ENCODE measurements at regions of chr2 and their contacts with region 1.

Region 1: GRCh38 chr2:207133820-207134519 is 31.8 kb downstream of the KLF7 start:
- DNase-seq: peak; percentile 90
- H3K4me3 ChIP-seq: peak overlapping the region; percentile 10 to 18
- H3K27ac ChIP-seq: peak overlapping the region; percentile 84 to 100
- H3K4me1 ChIP-seq: peaks cover 0 to 93% (median 68%) of the 10 kb centered on the region in 4 donors
- H3K27me3 ChIP-seq: no peaks in the 10 kb centered on the region
- CTCF ChIP-seq: no peak

Region 2: DNA sequence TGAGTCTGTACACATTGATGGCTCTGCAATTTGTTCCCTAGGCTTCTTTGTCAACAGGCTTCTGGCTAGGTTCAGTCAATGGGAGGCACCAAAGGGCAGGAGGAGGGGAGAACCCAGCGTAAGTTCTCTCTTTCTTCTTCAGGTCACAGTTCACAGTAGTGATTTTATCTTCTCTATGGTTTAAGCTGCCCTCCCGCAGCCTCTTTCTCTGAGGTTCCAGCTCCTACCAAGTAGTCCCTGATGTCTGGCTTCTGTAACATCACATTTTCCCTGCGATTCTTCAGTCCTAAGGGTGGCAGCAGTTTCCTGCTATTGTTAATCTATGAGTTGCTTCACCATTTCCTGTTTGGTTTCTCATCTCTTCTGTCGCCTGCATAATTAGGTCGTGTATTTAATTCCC is 87.2 kb before region 1 on chr2:
- intact Hi-C with region 1: loop called (anchors 10 kb)
- DNase-seq: no peak
- H3K4me3 ChIP-seq: no peak overlapping the region
- H3K27ac ChIP-seq: no peak overlapping the region
- H3K4me1 ChIP-seq: peaks cover 0 to 44% (median 26%) of the 10 kb centered on the region in 4 donors
- H3K27me3 ChIP-seq: no peaks in the 10 kb centered on the region
- CTCF ChIP-seq: no peak

Region 3: DNA sequence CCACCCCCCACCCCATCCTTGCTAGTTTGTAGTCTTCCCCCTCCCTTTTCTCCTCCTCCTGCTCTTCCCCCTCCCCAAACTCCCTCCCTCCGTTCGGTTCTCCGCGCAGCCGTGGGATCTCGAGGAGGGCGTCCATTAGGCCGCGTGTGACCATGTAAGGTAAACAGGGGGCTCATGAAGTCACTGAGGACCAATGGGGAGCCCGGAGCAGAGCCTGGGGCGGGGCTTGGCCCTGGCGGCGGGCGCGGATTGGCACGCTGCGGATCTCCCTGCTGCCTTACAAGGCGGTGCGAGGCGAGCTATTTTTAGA is 32.0 kb after region 1 on chr2:
- intact Hi-C with region 1: loop called (anchors 5 kb)
- DNase-seq: peak; percentile 99 to 100
- H3K4me3 ChIP-seq: peak overlapping the region; percentile 90 to 98
- H3K27ac ChIP-seq: peak overlapping the region; percentile 100
- H3K4me1 ChIP-seq: peaks cover 0 to 33% (median 17%) of the 10 kb centered on the region in 4 donors
- H3K27me3 ChIP-seq: no peaks in the 10 kb centered on the region
- CTCF ChIP-seq: no peak

Measured in tibial artery (tissue), 4 donors.